BJ (cell line): ENCODE measurements at regions of chrX and their contacts with region 1.

Region 1: DNA sequence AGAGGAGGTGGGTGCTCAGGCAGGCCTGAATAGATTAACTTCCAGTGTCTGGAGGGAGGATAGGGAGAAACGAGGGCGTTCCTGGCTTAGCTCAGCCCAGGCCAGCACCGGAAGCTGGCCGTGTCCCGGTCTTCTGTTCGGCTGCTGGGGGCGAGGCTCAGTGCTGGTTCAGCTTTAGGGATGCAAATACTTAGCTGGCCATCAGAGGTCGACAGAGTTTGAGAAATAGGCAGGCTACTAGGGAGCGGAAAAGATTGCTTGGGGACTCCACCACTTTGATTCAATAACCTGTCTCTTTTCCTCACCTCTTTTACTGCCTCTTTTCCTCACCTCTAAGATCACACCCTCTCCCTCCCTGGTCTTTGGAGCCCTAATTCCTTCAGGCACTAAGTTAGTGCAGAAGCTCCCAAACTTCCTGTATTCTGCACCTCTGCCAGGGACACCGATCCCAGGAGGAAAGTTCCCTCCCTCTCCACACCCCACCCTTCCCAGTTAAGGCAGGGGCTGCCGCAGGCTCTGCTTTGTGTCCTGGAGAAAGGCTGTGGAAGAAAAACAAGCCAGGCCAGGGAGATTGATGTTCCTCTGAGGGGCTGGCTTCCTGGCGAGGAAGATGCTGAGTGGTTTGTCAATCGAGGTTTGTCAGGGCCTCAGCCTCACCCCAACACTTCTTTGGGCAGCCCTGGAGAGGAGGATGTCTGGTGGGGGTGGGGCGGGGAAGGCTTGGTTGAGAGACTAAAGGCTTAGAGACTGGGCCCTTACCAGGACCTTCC is 6.0 kb upstream of the EFNB1 start:
- DNase-seq: no peak
- H3K4me3 ChIP-seq: no peak overlapping the region
- H3K27me3 ChIP-seq: no peaks in the 10 kb centered on the region
- CTCF ChIP-seq: peak; percentile 61

Region 2: GRCh38 chrX:69222103-69223090 is 399.6 kb after region 1 on chrX:
- CTCF ChIA-PET with region 1: interaction called, 90 read pairs
- POLR2A ChIA-PET with region 1: no interaction called
- DNase-seq: peak; percentile 1
- H3K4me3 ChIP-seq: no peak overlapping the region
- H3K27me3 ChIP-seq: no peaks in the 10 kb centered on the region; the same call in 1 of the 2 replicates
- CTCF ChIP-seq: peak; percentile 80

Region 3: GRCh38 chrX:69285881-69286564 is 463.2 kb after region 1 on chrX:
- CTCF ChIA-PET with region 1: interaction called, 22 read pairs
- POLR2A ChIA-PET with region 1: no interaction called
- DNase-seq: no peak
- H3K4me3 ChIP-seq: peak overlapping the region; percentile 37
- H3K27me3 ChIP-seq: no peaks in the 10 kb centered on the region
- CTCF ChIP-seq: peak; percentile 88